Mammary epithelial cell (primary cell): ENCODE measurements at regions of chr9 and their contacts with region 1.

Region 1: GRCh38 chr9:91101611-91102168 is 260.0 kb downstream of the AUH start:
- DNase-seq: no peak
- H3K4me3 ChIP-seq: no peak overlapping the region
- H3K27ac ChIP-seq: no peak overlapping the region
- H3K4me1 ChIP-seq: peaks cover 15% of the 10 kb centered on the region
- H3K27me3 ChIP-seq: no peaks in the 10 kb centered on the region
- CTCF ChIP-seq: no peak

Region 2: DNA sequence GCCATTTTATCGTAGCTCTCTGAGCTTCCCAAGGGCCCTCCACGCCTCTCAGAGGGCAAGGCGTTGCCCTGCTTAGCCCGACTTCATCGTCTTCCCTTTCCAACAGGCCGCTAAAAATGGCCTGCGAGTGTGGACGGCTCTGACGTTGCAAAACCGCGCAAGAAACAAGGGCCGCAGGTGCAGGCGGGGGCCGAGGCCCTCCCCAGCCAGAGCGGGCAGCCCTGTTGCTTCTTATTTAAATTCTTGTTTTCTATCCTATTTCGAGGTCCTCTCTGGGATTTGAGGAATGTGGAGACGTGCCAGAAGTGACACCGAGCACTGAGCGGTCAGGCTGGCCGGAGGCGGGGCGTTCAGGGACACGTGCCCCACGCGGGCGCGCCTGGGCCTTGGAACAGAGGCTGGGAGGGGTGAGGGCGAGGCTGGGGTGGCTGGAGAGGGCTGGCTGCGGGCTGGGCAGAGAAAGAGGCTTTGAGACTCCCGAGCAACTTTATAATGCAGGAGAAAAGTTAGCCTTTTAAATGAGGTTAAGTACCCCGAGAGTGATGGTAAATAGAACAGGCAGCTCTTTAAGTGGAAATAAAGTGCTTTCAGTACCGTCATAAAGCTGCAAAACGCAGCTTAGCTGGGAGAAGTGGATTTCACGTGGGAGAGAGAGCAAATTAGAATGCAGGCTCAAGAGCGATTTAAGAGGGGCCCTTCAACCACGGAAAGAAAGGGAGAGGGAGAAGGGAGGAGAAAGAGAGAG is 16.4 kb after region 1 on chr9:
- CTCF ChIA-PET with region 1: no interaction called
- dilution Hi-C with region 1: no loop called
- in situ Hi-C with region 1: no loop called
- intact Hi-C with region 1: loop called (anchors 2 kb)
- DNase-seq: no peak
- H3K4me3 ChIP-seq: no peak overlapping the region
- H3K27ac ChIP-seq: no peak overlapping the region
- H3K4me1 ChIP-seq: peaks cover 26% of the 10 kb centered on the region
- H3K27me3 ChIP-seq: no peaks in the 10 kb centered on the region
- CTCF ChIP-seq: no peak

Region 3: DNA sequence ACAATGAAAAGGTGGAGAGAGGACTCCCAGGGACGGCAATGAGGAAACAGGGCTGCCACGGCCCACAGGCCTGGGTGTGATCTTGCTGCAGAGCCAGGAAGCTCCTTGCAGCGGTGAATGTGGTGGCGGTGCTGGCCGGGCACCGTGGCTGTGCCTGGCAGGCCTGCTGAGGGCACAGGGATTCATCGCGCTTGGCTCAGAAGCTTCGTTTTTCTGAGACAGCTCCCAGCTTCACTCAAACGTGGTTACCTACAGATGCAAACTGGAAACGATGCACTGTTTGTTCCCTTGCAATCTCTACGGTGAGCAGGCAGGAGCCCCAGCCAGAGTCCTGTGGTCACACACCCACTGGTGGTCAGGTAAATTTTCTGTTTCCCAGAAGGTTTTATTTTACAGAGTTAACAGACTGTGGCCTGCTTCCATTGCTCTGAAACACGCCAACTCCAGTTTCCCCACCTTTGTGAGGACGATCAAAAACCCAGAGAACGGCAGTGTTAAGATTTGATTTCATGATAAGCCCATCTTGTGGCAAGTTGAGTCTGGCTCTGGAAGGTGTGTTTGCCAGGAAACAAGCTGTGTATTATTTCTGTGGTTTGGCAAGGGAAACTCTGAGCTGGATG is 76.1 kb after region 1 on chr9:
- CTCF ChIA-PET with region 1: no interaction called
- dilution Hi-C with region 1: no loop called
- in situ Hi-C with region 1: no loop called
- intact Hi-C with region 1: loop called (anchors 5 kb)
- DNase-seq: peak; percentile 96
- H3K4me3 ChIP-seq: no peak overlapping the region
- H3K27ac ChIP-seq: peak overlapping the region; percentile 78
- H3K4me1 ChIP-seq: peaks cover 46% of the 10 kb centered on the region
- H3K27me3 ChIP-seq: no peaks in the 10 kb centered on the region
- CTCF ChIP-seq: no peak

Region 4: DNA sequence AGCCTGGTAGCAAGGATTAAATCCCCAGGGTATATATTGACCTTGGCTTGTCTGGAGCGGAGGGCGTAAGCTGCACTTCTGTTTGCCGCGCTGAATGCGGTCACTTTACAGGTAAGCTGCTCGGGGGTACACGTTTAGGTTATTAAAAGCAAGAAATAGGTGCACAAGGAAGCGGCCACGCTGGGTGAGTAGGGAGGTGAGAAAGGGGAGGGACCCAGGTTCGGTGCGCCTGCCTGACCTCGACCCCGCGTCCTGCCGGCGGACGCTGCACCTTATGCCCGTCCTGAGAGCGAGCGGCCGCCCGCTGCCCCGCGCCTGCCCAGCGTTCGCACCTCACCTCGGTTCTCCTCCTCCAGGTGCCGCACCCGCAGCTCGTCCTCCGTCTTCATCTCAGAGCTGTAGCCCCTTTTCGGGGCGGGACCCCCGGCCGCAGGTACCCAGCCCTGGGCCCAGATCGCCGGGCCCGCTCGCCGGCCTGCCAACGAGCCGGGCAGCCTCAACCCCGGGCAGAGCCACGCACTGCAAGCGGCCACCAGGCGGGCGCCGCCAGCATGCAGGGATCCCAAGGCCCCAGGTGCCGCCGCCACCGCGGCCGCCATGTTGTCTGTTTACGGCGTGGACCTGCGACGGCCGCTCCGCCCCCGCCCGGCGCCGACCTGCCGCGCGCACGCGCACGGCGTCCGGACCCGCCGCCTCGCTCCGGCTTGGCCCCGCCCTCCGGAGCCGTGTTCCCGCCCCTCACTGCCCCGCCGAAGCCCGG is 259.8 kb after region 1 on chr9 and contains the start of gene AUH:
- CTCF ChIA-PET with region 1: no interaction called
- dilution Hi-C with region 1: no loop called
- in situ Hi-C with region 1: no loop called
- intact Hi-C with region 1: loop called (anchors 5 kb)
- DNase-seq: peak; percentile 65
- H3K4me3 ChIP-seq: peak within 1 kb of the TSS; percentile 70 to 99 (median 96)
- H3K27ac ChIP-seq: peak within 1 kb of the TSS; percentile 71
- H3K4me1 ChIP-seq: peaks cover 14% of the 10 kb centered on the region
- H3K27me3 ChIP-seq: no peaks in the 10 kb centered on the region
- CTCF ChIP-seq: no peak
- total RNA-seq, gene AUH: 10.9 to 11.5 TPM